A673 (cell line): ENCODE measurements at regions of chr9 and their contacts with region 1.

Region 1: DNA sequence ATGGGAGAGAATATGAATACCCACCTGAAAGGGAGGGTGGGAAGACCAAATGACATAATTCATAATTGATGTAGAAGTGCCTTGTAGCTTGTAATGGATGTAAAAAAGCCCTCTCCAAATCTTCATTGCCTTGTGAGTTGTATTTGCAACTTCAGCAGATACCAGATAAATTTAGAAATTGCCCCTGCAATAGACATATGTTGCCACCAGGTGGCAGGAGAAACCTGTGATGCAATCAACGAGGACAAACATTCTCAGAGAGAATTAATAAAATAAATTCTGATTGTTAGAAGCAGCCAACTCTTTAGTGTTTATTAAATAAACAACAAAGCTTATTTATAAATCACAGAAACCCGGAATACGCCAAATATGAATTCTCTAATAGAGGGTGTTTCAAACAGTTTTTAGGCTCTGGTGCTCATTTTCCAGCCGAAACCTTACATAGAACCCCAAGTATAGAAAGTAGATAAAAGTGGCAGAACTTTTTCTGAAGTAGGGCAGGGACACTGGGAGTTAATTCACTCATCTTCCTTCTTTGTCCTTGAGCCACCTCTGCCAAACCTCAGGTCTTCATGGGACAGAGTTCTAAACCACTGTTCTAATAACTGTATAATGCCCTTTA is 147.8 kb downstream of the TMEM38B start:
- DNase-seq: peak; percentile 46
- H3K4me3 ChIP-seq: no peak overlapping the region
- H3K27ac ChIP-seq: no peak overlapping the region
- H3K4me1 ChIP-seq: no peaks in the 10 kb centered on the region
- H3K27me3 ChIP-seq: no peaks in the 10 kb centered on the region
- CTCF ChIP-seq: peak; percentile 88

Region 2: DNA sequence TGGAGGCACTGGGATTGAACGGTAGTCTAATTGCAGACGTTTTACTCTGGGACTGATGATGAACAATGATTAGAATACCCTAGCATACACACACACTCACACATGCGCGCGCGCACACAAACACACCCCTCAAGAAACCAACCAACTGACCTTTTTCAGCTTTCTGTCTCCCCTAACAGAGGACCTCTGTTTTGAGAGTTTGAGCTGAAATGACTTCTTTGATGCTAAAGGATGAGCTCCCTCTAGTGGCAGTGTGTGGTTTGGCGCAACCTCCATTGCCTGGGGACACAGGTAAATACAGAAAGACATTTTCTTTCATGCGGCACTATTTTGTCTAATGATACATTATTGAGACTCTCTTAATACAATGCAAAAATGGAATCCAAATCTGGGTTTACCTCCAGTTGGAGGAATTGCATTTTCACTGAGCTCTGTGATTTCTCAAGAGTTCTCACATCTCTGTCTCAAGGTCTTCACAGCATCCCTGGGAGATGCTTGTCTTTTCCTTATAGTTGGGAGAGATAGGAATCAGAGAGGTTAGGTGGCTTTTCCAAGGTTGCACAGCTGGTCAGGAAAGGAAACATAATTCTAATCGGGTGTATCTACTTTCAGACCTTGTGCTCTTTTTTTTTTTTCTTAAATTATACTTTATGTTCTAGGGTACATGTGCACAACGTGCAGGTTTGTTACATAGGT is 39.7 kb after region 1 on chr9:
- CTCF ChIA-PET with region 1: interaction called, 9 read pairs
- POLR2A ChIA-PET with region 1: no interaction called
- intact Hi-C with region 1: loop called (anchors 1 kb)
- DNase-seq: peak; percentile 70
- H3K4me3 ChIP-seq: no peak overlapping the region
- H3K27ac ChIP-seq: no peak overlapping the region
- H3K4me1 ChIP-seq: no peaks in the 10 kb centered on the region
- H3K27me3 ChIP-seq: no peaks in the 10 kb centered on the region
- CTCF ChIP-seq: peak; percentile 91